Activated CD8-positive, alpha-beta T cell treated with anti-CD3 and anti-CD28 coated beads for 36 hours (primary cell): ENCODE measurements at regions of chr19 and their contacts with region 1.

Region 1: DNA sequence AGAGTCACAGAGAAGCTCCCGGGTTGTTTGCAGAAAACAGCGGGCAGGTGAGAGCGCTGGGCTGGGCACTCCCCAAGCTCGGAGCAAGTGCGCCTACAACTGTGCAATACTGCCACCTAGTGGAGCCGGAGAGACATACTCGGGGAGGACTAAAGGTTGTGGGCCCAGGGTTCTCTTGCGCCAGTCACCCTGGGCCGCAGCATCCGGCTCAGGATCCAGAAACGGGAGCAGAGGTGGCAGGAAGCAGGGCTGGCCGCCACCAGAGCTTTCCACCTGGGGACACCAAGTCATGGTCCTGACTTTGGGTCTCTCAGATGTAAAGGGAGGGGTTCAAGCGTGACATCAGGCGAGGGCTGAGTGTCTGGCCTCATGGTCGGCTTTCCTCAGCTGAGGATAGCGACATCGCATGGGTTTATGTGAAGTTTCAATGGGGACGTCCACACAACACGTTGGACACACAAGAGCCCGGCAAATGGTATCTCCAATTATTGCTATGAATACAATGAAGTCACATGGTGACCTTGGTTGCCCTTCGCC is 11.2 kb upstream of the KLK4 start:
- DNase-seq: peak; percentile 84
- ATAC-seq: peak; percentile 100
- H3K4me3 Mint-ChIP-seq: no peak overlapping the region
- H3K27ac Mint-ChIP-seq: no peak overlapping the region
- H3K4me1 Mint-ChIP-seq: peaks cover 8% of the 10 kb centered on the region
- H3K27me3 Mint-ChIP-seq: peaks cover 39% of the 10 kb centered on the region
- CTCF ChIP-seq: peak; percentile 92

Region 2: GRCh38 chr19:50607874-50608785 is 314.3 kb before region 1 on chr19:
- CTCF ChIA-PET with region 1: interaction called, 4 read pairs
- POLR2A ChIA-PET with region 1: no interaction called
- intact Hi-C with region 1: loop called (anchors 10 kb)
- DNase-seq: peak; percentile 92
- ATAC-seq: peak; percentile 94
- H3K4me3 Mint-ChIP-seq: peak overlapping the region; percentile 31
- H3K27ac Mint-ChIP-seq: no peak overlapping the region
- H3K4me1 Mint-ChIP-seq: peaks cover 8% of the 10 kb centered on the region
- H3K27me3 Mint-ChIP-seq: peaks cover 33% of the 10 kb centered on the region
- CTCF ChIP-seq: peak; percentile 63

Region 3: DNA sequence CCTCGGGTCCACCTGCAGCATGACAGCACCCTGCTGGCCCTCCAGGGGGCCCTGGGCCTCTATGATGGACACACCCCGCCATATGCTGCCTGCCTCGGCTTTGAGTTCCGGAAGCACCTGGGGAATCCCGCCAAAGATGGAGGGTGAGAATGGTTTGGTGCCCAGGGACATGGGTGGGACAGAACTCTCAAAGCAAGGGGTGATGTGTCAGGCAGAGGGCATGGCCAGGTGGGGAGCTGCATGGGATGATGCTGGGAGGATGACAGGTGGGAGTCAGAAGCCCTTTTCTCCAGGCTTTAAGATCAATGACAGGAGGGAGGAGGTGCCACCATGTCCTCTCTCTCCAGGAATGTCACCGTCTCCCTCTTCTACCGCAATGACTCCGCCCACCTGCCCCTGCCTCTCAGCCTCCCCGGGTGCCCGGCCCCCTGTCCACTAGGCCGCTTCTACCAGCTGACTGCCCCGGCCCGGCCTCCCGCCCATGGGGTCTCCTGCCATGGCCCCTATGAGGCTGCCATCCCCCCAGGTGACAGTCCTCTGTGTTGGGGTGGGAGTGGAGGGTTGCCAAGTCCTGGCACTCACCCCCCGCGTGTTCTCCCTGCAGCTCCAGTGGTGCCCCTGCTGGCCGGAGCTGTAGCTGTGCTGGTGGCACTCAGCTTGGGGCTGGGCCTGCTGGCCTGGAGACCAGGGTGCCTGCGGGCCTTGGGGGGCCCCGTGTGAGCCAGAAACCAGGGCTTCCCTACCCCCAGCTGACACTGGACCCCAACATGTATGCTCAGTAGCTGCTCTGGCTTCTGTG is 127.7 kb before region 1 on chr19:
- CTCF ChIA-PET with region 1: interaction called, 13 read pairs
- POLR2A ChIA-PET with region 1: interaction called, 7 read pairs
- intact Hi-C with region 1: no loop called
- DNase-seq: peak; percentile 62
- ATAC-seq: peak; percentile 21
- H3K4me3 Mint-ChIP-seq: no peak overlapping the region
- H3K27ac Mint-ChIP-seq: peak overlapping the region; percentile 64
- H3K4me1 Mint-ChIP-seq: peaks cover 9% of the 10 kb centered on the region
- H3K27me3 Mint-ChIP-seq: no peaks in the 10 kb centered on the region
- CTCF ChIP-seq: peak; percentile 10

Region 4: DNA sequence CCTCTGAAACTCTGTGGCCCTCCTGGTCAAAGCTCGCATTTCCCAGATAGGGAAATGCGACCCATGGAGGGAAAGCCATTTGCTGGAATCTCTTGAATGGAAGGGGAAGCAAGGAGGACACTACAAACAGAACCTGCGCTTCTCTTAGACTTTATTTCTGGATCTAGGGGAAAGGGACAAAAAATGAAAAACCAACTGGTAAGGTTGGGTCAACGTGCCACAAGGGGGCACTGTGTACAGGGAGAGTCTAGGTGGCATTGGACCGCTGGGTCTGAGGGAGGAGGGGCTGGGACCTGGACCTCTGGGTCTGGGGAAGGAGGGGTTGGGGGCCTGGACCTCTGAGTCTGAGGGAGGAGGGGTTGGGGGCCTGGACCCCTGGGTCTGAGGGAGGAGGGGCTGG is 16.2 kb before region 1 on chr19:
- CTCF ChIA-PET with region 1: interaction called, 16 read pairs
- POLR2A ChIA-PET with region 1: no interaction called
- intact Hi-C with region 1: no loop called
- DNase-seq: peak; percentile 61
- ATAC-seq: peak; percentile 42
- H3K4me3 Mint-ChIP-seq: no peak overlapping the region
- H3K27ac Mint-ChIP-seq: no peak overlapping the region
- H3K4me1 Mint-ChIP-seq: peaks cover 8% of the 10 kb centered on the region
- H3K27me3 Mint-ChIP-seq: peaks cover 41% of the 10 kb centered on the region
- CTCF ChIP-seq: peak; percentile 47

Region 5: DNA sequence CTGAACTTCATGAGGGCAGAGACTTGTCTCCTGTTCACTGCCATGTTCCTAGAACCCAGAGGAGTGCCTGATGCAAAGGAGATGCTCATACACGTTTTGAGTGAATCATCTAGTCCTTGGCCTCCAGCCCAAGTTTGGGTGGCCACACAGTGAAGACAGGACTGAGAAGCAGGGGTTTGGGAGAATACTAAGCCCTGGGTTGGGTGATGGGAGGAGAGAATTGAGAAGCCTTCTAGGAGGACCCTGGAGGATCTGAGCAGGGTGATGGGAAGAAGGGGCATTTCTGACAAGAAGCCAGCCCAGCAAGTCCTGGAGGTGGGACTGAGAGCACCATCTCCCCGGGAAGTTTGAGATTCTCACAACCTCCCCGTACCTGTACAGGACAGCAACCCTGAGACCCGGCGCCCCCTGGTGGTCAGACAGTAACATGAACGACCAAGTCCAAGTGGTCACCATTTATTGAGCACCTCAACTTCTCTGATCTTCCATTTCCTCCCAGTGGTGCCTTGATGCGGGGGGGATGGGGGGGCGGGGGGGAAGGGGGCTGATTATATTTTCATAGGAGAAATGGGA is 174.9 kb after region 1 on chr19:
- CTCF ChIA-PET with region 1: interaction called, 10 read pairs
- POLR2A ChIA-PET with region 1: no interaction called
- intact Hi-C with region 1: loop called (anchors 5 kb)
- DNase-seq: peak; percentile 74
- ATAC-seq: peak; percentile 72
- H3K4me3 Mint-ChIP-seq: no peak overlapping the region
- H3K27ac Mint-ChIP-seq: peak overlapping the region; percentile 51
- H3K4me1 Mint-ChIP-seq: peaks cover 14% of the 10 kb centered on the region
- H3K27me3 Mint-ChIP-seq: no peaks in the 10 kb centered on the region
- CTCF ChIP-seq: peak; percentile 54